H1 (cell line): ENCODE measurements at regions of chr20 and their contacts with region 1.

Region 1: GRCh38 chr20:39049684-39050554 is 87.8 kb downstream of the DHX35 start:
- DNase-seq: peak; percentile 59 to 96
- H3K4me3 ChIP-seq: peak overlapping the region; percentile 47 to 76 (median 64)
- H3K27ac ChIP-seq: no peak overlapping the region
- H3K4me1 ChIP-seq: peaks cover 0 to 6% (median under 1%) of the 10 kb centered on the region in 4 experiments; a peak in 3 of 7 replicates
- H3K27me3 ChIP-seq: peaks cover 0 to 10% (median 6%) of the 10 kb centered on the region in 4 experiments; a peak in 4 of 7 replicates
- CTCF ChIP-seq: peak; percentile 89 to 98 (median 94)
- EP300 ChIP-seq: no peak
- POLR2A ChIP-seq: 0 out of 3 replicates have a peak, but pooled peaks of 1 of the 2 experiments have one; percentile 41
- RAD21 ChIP-seq: peak; percentile 94 to 98

Region 2: DNA sequence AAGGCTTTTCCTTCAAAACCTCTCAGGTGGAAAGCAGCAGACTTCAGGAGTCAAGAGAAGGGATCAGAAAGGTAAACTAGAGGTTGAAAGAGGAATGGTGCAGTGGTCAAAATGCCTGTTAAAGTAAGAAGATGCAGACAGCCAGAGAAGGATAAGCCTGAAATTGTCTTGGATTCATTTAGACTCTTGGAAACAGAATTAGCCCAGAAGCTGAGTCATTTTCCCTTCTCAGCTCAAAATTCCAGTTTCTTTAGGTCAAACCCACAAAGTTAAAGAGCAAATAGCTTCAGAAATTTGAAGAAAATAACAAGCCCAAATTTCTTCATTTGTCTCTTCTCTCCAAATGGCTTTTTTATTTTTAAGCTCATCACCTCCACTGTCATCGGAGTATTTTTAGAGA is 13.9 kb before region 1 on chr20:
- CTCF ChIA-PET with region 1: interaction called, 10 read pairs
- POLR2A ChIA-PET with region 1: interaction called, 4 read pairs
- DNase-seq: no peak
- H3K4me3 ChIP-seq: no peak overlapping the region
- H3K27ac ChIP-seq: no peak overlapping the region
- H3K4me1 ChIP-seq: no peaks in the 10 kb centered on the region
- H3K27me3 ChIP-seq: no peaks in the 10 kb centered on the region; a peak in 1 of 7 replicates
- CTCF ChIP-seq: no peak
- EP300 ChIP-seq: no peak
- POLR2A ChIP-seq: no peak
- RAD21 ChIP-seq: no peak

Region 3: GRCh38 chr20:39070484-39071231 is 20.7 kb after region 1 on chr20:
- CTCF ChIA-PET with region 1: interaction called, 127 read pairs
- POLR2A ChIA-PET with region 1: no interaction called
- DNase-seq: no peak
- H3K4me3 ChIP-seq: no peak overlapping the region
- H3K27ac ChIP-seq: no peak overlapping the region
- H3K4me1 ChIP-seq: peaks cover 0 to 3% (median 0%) of the 10 kb centered on the region in 4 experiments; a peak in 2 of 7 replicates
- H3K27me3 ChIP-seq: 0 out of 7 replicates have a peak, but pooled peaks cover 0 to 2% (median 0%) of the 10 kb centered on the region in 4 experiments
- CTCF ChIP-seq: no peak
- EP300 ChIP-seq: no peak
- POLR2A ChIP-seq: no peak
- RAD21 ChIP-seq: no peak

Region 4: DNA sequence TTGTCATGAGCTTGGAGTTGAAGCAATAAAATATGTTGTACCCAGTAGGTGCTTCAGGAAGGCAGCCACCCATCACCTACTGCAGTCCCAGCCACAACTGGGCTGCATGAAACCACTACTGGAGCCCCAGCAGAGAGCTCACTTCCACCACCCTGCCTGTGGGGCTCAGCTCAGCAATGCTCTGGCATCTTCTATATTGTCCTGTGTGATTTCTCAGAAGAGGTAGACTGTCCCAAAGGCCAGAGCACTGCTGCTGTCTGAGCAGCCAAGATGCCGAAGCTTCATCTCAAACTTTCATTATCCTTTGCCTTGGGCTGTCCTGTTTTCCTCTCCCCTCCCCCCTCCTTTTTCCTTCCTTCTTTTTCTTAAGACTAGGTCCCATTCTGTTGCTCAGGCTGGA is 39.1 kb after region 1 on chr20:
- CTCF ChIA-PET with region 1: interaction called, 127 read pairs
- POLR2A ChIA-PET with region 1: no interaction called
- DNase-seq: no peak
- H3K4me3 ChIP-seq: no peak overlapping the region
- H3K27ac ChIP-seq: no peak overlapping the region
- H3K4me1 ChIP-seq: 0 out of 7 replicates have a peak, but pooled peaks cover 0 to 2% (median 0%) of the 10 kb centered on the region in 4 experiments
- H3K27me3 ChIP-seq: peaks cover 0 to 2% (median 0%) of the 10 kb centered on the region in 4 experiments; a peak in 2 of 7 replicates
- CTCF ChIP-seq: no peak
- EP300 ChIP-seq: no peak
- POLR2A ChIP-seq: no peak
- RAD21 ChIP-seq: no peak

Region 5: DNA sequence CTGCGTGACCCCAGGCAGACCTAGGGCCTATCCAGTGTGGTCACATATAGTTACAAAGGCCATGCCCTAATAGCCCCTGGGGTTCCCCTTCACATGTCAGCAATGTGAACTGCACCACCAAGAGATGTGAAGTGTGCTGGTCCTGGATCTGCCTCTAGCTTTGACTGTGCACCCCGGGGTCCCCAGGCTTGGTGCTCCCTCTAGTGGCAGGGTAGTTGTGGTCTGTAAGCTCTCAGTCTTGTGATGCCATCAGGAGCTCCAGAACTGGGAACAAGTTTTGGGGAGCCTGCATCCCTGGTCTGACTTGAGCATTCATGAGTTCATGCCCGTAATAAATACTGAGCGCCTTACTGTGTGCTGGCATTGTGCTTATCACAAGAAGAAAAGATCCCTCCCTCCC is 55.6 kb after region 1 on chr20:
- CTCF ChIA-PET with region 1: interaction called, 15 read pairs
- POLR2A ChIA-PET with region 1: interaction called, 3 read pairs
- DNase-seq: no peak
- H3K4me3 ChIP-seq: no peak overlapping the region
- H3K27ac ChIP-seq: no peak overlapping the region
- H3K4me1 ChIP-seq: peaks cover 0 to 9% (median 4%) of the 10 kb centered on the region in 4 experiments; a peak in 4 of 7 replicates
- H3K27me3 ChIP-seq: no peaks in the 10 kb centered on the region
- CTCF ChIP-seq: peak in 2 of 3 experiments; percentile 26 to 37; a peak in 2 of 4 replicates
- EP300 ChIP-seq: no peak
- POLR2A ChIP-seq: no peak
- RAD21 ChIP-seq: no peak